Heart right ventricle (tissue), 16 donors: ENCODE measurements at regions of chr6 and their contacts with region 1.

Region 1: DNA sequence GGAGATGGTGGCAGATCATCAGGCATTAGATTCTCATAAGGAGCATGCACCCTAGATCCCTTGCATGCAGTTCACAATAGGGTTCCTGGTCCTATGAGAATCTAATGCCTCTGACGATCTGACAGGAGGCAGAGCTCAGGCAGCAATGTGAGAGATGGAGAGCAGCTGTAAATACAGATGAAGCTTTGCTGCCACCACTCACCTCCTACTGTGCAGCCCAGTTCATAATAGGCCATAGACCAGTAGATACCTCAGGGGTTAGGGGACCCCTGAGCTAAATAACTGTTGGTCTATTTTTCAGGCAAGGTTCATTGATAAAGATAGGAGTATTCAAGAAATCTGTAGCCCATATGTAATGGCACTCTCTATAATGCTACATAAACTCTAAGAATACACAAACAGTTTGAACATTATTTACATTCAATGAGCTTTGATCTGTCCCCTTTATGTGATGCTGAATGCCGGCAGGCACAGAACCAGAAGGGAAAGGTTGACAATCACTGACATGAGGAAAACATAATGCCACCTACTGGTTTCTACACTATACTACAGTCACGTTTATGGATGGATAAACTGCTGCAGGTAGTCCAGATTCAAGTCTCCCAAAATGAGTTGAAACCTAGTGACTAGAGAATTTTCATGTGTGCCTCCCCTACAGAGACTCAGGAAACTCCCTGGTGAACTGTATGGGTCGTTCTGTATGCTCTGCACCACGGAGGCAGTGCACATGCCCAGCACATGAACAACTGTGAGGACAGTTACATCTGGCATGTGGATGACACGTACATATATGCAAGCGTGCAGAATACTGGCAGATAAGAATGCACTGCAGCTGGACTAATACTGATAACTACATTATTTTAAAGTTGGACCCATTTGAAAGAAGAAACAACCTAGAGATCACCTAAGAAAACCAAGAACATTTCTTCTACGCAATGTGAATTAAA is 72.0 kb downstream of the DST start:
- DNase-seq: no peak
- ATAC-seq: peak; percentile 12 to 76 (median 72)
- H3K4me3 ChIP-seq: no peak overlapping the region
- H3K27ac ChIP-seq: no peak overlapping the region
- H3K4me1 ChIP-seq: peaks cover 0 to 25% (median 3%) of the 10 kb centered on the region in 9 donors
- H3K27me3 ChIP-seq: no peaks in the 10 kb centered on the region
- CTCF ChIP-seq: peak; percentile 43 to 78 (median 63)

Region 2: GRCh38 chr6:56359201-56359899 is 211.3 kb before region 1 on chr6:
- intact Hi-C with region 1: loop called in 5 of 10 experiments (anchors 2 to 10 kb)
- DNase-seq: peak in 1 of 2 donors; percentile 73
- ATAC-seq: peak; percentile 58 to 81 (median 72)
- H3K4me3 ChIP-seq: no peak overlapping the region
- H3K27ac ChIP-seq: no peak overlapping the region
- H3K4me1 ChIP-seq: peaks cover 0 to 17% (median 0%) of the 10 kb centered on the region in 9 donors
- H3K27me3 ChIP-seq: no peaks in the 10 kb centered on the region
- CTCF ChIP-seq: peak; percentile 74 to 90 (median 85)